Activated CD8-positive, alpha-beta T cell treated with anti-CD3 and anti-CD28 coated beads for 36 hours (primary cell): ENCODE measurements at regions of chr1 and their contacts with region 1.

Region 1: DNA sequence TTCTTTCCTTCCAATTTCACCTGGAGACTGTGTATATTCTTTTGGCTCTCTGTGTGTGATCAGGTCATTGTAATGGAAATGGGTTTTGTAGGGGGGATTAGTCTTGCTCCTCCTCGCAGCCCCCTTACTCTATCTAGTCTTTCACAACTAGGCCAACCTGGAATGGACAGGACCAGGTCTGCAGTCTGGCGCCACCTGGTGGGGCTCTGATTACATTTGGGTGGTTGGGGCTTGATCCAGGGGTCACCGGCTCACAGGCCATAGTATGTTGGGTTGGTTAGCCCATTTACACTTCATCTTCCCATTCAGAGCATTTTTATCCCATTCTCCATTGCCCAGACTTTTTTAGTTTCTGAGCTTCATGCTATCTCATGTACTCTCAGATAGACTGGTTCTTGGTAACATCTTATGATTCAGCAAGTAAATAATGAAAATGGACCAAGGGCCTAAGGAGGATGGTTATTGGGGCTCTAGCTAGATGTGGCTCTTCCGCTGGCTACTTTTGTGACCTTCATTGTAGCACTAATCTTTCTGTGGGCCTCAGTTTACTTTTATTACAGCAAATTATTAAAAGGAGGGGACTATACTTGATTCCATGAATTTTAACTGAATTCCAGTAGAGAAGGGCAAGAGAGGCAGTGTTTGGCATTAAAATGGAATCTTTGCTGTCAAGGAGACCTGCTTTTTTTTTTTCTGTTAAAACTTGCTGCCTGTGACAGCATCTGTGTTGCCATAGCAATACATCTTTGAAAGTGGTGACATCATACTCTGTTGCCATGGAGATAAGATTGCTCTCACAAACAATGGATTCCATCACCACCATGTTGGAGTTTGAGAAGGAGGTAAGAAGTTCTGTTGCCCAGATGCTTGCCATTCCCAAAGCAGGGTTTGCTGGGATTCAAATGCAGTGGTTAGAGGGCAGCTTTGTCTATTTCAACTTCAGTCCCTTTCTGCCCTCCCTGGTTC is 150.1 kb downstream of the PLXNA2 start:
- DNase-seq: peak; percentile 86
- ATAC-seq: peak; percentile 78
- H3K4me3 Mint-ChIP-seq: no peak overlapping the region
- H3K27ac Mint-ChIP-seq: no peak overlapping the region
- H3K4me1 Mint-ChIP-seq: no peaks in the 10 kb centered on the region
- H3K27me3 Mint-ChIP-seq: no peaks in the 10 kb centered on the region
- CTCF ChIP-seq: peak; percentile 83

Region 2: GRCh38 chr1:208029381-208030287 is 64.4 kb before region 1 on chr1:
- CTCF ChIA-PET with region 1: interaction called, 129 read pairs
- POLR2A ChIA-PET with region 1: no interaction called
- intact Hi-C with region 1: no loop called
- DNase-seq: no peak
- ATAC-seq: no peak
- H3K4me3 Mint-ChIP-seq: no peak overlapping the region
- H3K27ac Mint-ChIP-seq: no peak overlapping the region
- H3K4me1 Mint-ChIP-seq: no peaks in the 10 kb centered on the region
- H3K27me3 Mint-ChIP-seq: no peaks in the 10 kb centered on the region
- CTCF ChIP-seq: no peak

Region 3: DNA sequence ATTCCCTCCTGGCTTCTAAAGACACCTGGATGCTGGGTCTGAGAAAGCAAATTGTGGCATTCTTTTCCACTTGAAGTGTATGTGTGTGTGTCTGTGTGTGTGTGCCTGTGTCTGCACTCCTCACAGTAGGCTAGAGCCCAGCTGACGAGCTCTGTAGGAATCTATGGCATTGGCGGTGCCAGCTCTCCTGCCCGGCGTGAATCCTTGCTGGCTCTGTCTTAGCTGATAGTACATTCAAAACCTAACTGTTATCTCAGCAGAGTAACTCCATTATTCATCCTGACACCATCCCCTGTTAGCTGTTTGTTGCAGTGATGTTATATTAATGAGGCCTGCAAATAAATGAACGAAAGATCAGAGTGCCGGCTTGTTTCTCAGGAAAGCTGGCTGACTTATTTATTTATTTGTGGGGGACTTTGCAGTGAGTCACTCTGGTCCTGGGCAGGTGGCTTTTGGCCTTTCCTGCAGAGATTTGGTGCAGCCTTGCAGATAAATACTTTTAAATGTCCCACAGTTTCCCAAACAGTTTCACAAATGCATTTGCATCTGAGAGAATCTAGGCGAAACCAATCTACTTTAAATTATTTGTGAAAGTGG is 22.5 kb before region 1 on chr1:
- CTCF ChIA-PET with region 1: interaction called, 12 read pairs
- POLR2A ChIA-PET with region 1: no interaction called
- intact Hi-C with region 1: no loop called
- DNase-seq: no peak
- ATAC-seq: no peak
- H3K4me3 Mint-ChIP-seq: no peak overlapping the region
- H3K27ac Mint-ChIP-seq: no peak overlapping the region
- H3K4me1 Mint-ChIP-seq: no peaks in the 10 kb centered on the region
- H3K27me3 Mint-ChIP-seq: no peaks in the 10 kb centered on the region
- CTCF ChIP-seq: no peak

Region 4: DNA sequence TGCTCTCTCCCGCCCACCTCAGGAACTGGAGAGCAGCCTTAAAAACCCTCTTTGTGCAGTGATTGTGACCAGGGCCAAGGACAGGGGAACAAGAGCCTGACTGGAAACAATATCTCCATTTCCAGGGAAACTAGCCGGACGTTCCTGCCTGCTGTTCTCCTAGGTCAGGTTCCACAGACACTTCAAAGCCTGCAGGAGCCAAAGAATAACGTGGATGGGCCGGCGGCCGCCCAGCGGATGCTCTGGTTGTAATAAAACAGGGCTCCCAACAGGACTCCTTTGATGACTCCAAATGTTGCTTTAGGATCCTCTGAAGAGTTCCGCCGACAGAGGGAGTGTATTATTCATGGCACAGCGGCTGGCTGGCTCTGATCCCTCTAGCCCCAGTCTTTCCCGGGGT is 12.1 kb before region 1 on chr1:
- CTCF ChIA-PET with region 1: interaction called, 14 read pairs
- POLR2A ChIA-PET with region 1: interaction called, 3 read pairs
- intact Hi-C with region 1: no loop called
- DNase-seq: no peak
- ATAC-seq: no peak
- H3K4me3 Mint-ChIP-seq: no peak overlapping the region
- H3K27ac Mint-ChIP-seq: no peak overlapping the region
- H3K4me1 Mint-ChIP-seq: peaks cover 10% of the 10 kb centered on the region
- H3K27me3 Mint-ChIP-seq: no peaks in the 10 kb centered on the region
- CTCF ChIP-seq: no peak